CD4-positive, alpha-beta T cell (primary cell): ENCODE measurements at regions of chr19 and their contacts with region 1.

Region 1: DNA sequence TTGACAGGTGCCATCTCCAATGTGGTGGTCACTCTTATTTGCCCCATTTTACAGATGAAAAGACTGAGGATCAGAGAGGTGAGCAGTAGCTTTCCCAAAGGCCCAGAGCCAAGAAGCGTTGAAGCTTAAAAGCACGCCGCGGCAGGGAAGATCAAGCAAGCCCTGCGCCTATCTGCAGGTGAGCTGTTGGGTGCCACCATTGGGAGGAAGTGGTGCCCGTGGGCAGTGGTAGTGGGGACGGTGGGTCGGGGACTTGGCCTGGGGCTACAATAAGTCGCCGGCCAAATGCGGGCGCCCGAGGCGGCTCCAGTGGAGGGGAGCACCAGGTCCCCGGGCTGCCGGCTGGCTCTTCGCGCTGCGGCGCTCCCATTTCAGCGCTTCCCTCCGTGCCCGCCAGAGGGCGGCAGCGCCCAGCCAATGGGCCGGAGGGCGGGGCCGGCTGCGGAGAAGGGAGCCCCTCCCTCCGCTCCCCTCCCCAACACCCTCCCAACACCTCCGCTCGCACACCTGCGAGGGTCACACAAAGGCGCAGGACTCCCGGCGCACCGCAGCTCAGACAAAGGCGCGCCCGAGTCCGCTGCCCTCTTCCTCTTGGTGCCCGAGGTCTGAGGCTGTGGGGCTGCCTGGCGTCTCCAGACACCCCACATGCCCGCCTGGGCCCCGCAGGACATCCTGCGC is 744 bp upstream of the POU2F2 start:
- DNase-seq: peak; percentile 71 to 92 (median 84)
- ATAC-seq: peak; percentile 72
- H3K4me3 ChIP-seq: peak overlapping the region; percentile 63
- H3K4me3 Mint-ChIP-seq: peak overlapping the region; percentile 89
- H3K27ac ChIP-seq: peak overlapping the region; percentile 71 to 76
- H3K27ac Mint-ChIP-seq: peak overlapping the region; percentile 71
- H3K4me1 ChIP-seq: peaks cover 78% of the 10 kb centered on the region
- H3K4me1 Mint-ChIP-seq: peaks cover 72% of the 10 kb centered on the region
- H3K27me3 ChIP-seq: no peaks in the 10 kb centered on the region
- H3K27me3 Mint-ChIP-seq: no peaks in the 10 kb centered on the region
- CTCF ChIP-seq: peak; percentile 97

Region 2: GRCh38 chr19:41682386-41682785 is 450.6 kb before region 1 on chr19:
- CTCF ChIA-PET with region 1: no interaction called
- POLR2A ChIA-PET with region 1: no interaction called
- intact Hi-C with region 1: no loop called
- DNase-seq: no peak
- ATAC-seq: no peak
- H3K4me3 ChIP-seq: no peak overlapping the region
- H3K4me3 Mint-ChIP-seq: no peak overlapping the region
- H3K27ac ChIP-seq: no peak overlapping the region
- H3K27ac Mint-ChIP-seq: no peak overlapping the region
- H3K4me1 ChIP-seq: no peaks in the 10 kb centered on the region
- H3K4me1 Mint-ChIP-seq: no peaks in the 10 kb centered on the region
- H3K27me3 ChIP-seq: peaks cover 4 to 20% of the 10 kb centered on the region in 2 experiments
- H3K27me3 Mint-ChIP-seq: peaks cover 82% of the 10 kb centered on the region
- CTCF ChIP-seq: no peak

Region 3: GRCh38 chr19:42122691-42123607 is 10.0 kb before region 1 on chr19:
- CTCF ChIA-PET with region 1: interaction called, 11 read pairs
- POLR2A ChIA-PET with region 1: interaction called, 7 read pairs
- intact Hi-C with region 1: no loop called
- DNase-seq: peak in 7 of 14 experiments; percentile 23 to 53 (median 42)
- ATAC-seq: peak; percentile 27
- H3K4me3 ChIP-seq: peak overlapping the region; percentile 40
- H3K4me3 Mint-ChIP-seq: peak overlapping the region; percentile 59
- H3K27ac ChIP-seq: peak overlapping the region; percentile 89 to 91
- H3K27ac Mint-ChIP-seq: peak overlapping the region; percentile 88
- H3K4me1 ChIP-seq: peaks cover 61% of the 10 kb centered on the region
- H3K4me1 Mint-ChIP-seq: peaks cover 60% of the 10 kb centered on the region
- H3K27me3 ChIP-seq: no peaks in the 10 kb centered on the region
- H3K27me3 Mint-ChIP-seq: no peaks in the 10 kb centered on the region
- CTCF ChIP-seq: no peak

Region 4: GRCh38 chr19:42184401-42184861 is 51.4 kb after region 1 on chr19:
- CTCF ChIA-PET with region 1: interaction called, 11 read pairs
- POLR2A ChIA-PET with region 1: interaction called, 3 read pairs
- intact Hi-C with region 1: loop called (anchors 1 kb)
- DNase-seq: peak; percentile 51 to 82 (median 62)
- ATAC-seq: peak; percentile 62
- H3K4me3 ChIP-seq: no peak overlapping the region
- H3K4me3 Mint-ChIP-seq: peak overlapping the region; percentile 6
- H3K27ac ChIP-seq: no peak overlapping the region
- H3K27ac Mint-ChIP-seq: no peak overlapping the region
- H3K4me1 ChIP-seq: peaks cover 56% of the 10 kb centered on the region
- H3K4me1 Mint-ChIP-seq: peaks cover 53% of the 10 kb centered on the region
- H3K27me3 ChIP-seq: peaks cover 6% of the 10 kb centered on the region in 2 experiments
- H3K27me3 Mint-ChIP-seq: peaks cover 9% of the 10 kb centered on the region
- CTCF ChIP-seq: peak; percentile 90

Region 5: DNA sequence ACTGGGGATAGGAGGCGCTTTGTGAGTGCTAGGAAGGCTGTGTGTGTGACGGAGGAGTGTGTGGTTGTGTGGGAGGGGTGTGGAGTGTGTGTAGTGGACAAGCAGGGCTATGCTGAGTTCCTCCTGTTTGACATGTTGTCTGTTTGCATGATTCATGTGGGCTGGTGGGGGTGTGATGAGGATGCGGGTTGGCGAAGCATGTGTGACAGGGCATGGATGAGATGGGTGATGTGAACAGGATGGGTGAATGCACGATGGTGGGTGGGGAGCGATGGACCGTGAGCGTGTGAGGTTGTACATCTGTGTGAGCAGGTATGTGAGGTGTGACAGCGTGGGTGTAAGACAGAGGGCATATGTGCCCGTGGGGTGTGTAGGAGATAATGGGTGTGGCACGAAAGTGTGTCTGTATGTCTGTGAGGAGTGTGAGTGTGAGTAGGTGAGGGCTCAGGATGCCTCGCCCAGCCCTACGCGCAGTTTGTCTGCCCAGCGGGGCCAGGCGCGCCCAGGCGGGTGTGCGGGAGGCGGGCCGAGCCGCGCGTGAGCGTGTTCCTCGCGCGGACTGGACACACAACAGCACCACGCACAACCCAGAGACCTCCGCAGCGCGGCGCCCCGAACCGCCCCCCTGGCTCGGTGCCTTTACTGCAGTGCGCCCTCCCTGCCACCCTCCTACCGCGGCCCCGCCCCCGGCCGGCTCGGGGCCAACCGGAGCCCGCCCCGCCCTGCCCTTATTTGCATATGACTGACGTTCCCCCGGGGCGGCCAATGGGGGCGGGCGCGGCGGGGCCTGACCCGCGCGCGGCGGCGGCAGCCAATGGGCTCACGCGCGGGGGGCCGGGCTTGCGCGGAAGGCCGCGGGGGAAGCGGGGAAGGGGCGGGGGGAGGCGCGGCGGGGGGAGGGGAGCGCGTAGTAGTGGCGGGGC is 150.4 kb after region 1 on chr19:
- CTCF ChIA-PET with region 1: interaction called, 8 read pairs
- POLR2A ChIA-PET with region 1: interaction called, 6 read pairs
- intact Hi-C with region 1: loop called in 1 of 2 experiments (anchors 2 kb)
- DNase-seq: peak; percentile 92 to 99 (median 97)
- ATAC-seq: peak; percentile 62
- H3K4me3 ChIP-seq: peak overlapping the region; percentile 55
- H3K4me3 Mint-ChIP-seq: no peak overlapping the region
- H3K27ac ChIP-seq: peak overlapping the region; percentile 86 to 88
- H3K27ac Mint-ChIP-seq: no peak overlapping the region
- H3K4me1 ChIP-seq: peaks cover 71% of the 10 kb centered on the region
- H3K4me1 Mint-ChIP-seq: peaks cover 43% of the 10 kb centered on the region
- H3K27me3 ChIP-seq: no peaks in the 10 kb centered on the region
- H3K27me3 Mint-ChIP-seq: no peaks in the 10 kb centered on the region
- CTCF ChIP-seq: no peak

Region 6: DNA sequence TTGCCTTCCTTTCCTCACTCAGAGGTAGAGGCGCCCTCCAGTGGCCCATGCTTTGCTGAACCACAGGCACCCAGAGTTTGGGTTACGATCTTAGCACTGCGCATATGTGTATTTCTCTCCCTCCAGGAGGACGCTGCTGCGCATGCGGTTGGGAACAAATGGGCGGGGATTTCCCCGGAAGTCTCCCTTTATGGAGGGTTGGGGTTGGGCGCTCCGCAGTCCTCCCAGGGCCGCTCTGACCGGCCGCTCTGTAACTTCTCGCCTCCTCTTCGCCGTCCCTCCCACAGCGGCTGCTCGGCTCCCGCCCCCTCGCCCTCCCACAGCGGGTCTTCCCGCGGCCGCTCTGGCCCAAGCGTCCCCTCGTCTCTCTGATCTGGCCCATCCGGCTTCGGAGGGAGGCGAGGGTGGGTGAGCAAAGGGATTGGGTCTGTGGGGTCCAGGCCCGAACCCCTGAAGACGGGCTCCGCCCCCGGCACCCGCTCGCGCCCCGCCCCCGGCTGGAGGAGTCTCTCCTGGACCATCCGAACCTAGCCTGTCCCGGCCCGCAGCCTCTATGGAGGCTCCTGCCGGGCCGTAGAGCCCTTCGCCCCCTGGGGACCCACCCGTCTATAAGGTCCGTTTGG is 192.4 kb after region 1 on chr19 and contains the start of gene MEGF8:
- CTCF ChIA-PET with region 1: no interaction called
- POLR2A ChIA-PET with region 1: no interaction called
- intact Hi-C with region 1: loop called (anchors 1 kb)
- DNase-seq: peak; percentile 97 to 99 (median 98)
- ATAC-seq: peak; percentile 95
- H3K4me3 ChIP-seq: peak within 1 kb of the TSS; percentile 84
- H3K4me3 Mint-ChIP-seq: peak within 1 kb of the TSS; percentile 94
- H3K27ac ChIP-seq: peak within 1 kb of the TSS; percentile 46 to 55
- H3K27ac Mint-ChIP-seq: peak within 1 kb of the TSS; percentile 50
- H3K4me1 ChIP-seq: peaks cover 26% of the 10 kb centered on the region
- H3K4me1 Mint-ChIP-seq: peaks cover 25% of the 10 kb centered on the region
- H3K27me3 ChIP-seq: peaks cover 16 to 21% of the 10 kb centered on the region in 2 experiments
- H3K27me3 Mint-ChIP-seq: peaks cover 25% of the 10 kb centered on the region
- CTCF ChIP-seq: peak; percentile 90
- total RNA-seq, gene MEGF8: 4.1 to 4.2 TPM

Region 7: DNA sequence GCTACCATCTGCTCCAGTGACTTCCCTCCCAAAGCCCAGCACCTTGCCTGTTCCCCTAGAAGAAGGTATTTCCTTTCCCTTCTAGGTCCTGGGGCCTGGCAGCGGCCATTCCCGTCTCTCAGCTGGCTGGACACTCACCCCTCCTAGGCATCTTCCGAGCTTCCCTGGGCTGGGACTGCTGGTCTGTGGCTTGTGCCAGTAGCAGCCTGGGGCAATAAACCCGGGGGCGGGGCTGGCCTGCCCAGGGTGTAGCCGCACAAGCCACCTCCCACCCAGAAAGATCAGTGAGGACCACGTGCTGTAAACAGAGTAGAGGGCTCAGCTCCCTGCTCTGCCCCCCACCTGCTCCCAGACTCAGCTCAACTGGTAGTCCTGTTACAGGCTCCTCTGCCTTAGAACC is 279.2 kb after region 1 on chr19:
- CTCF ChIA-PET with region 1: no interaction called
- POLR2A ChIA-PET with region 1: no interaction called
- intact Hi-C with region 1: no loop called
- DNase-seq: no peak
- ATAC-seq: no peak
- H3K4me3 ChIP-seq: no peak overlapping the region
- H3K4me3 Mint-ChIP-seq: no peak overlapping the region
- H3K27ac ChIP-seq: no peak overlapping the region
- H3K27ac Mint-ChIP-seq: no peak overlapping the region
- H3K4me1 ChIP-seq: peaks cover 3% of the 10 kb centered on the region
- H3K4me1 Mint-ChIP-seq: peaks cover 4% of the 10 kb centered on the region
- H3K27me3 ChIP-seq: no peaks in the 10 kb centered on the region
- H3K27me3 Mint-ChIP-seq: no peaks in the 10 kb centered on the region
- CTCF ChIP-seq: no peak